ENCODE measurements at regions of chr6 and their contacts with region 1.

Region 1: GRCh38 chr6:137975188-137975940 is 108.3 kb downstream of the TNFAIP3 start:
- DNase-seq: no peak
- H3K4me3 ChIP-seq: no peak overlapping the region
- H3K27ac ChIP-seq: no peak overlapping the region
- H3K4me1 ChIP-seq: peaks cover 4% of the 10 kb centered on the region
- H3K27me3 ChIP-seq: no peaks in the 10 kb centered on the region
- CTCF ChIP-seq: peak; percentile 31 to 43

Region 2: GRCh38 chr6:137661601-137662000 is 313.8 kb before region 1 on chr6:
- CTCF ChIA-PET with region 1: interaction called, 6 read pairs
- dilution Hi-C with region 1: no loop called
- in situ Hi-C with region 1: no loop called
- intact Hi-C with region 1: loop called (anchors 1 kb)
- DNase-seq: peak; percentile 16
- H3K4me3 ChIP-seq: no peak overlapping the region
- H3K27ac ChIP-seq: no peak overlapping the region
- H3K4me1 ChIP-seq: no peaks in the 10 kb centered on the region
- H3K27me3 ChIP-seq: peaks cover 4% of the 10 kb centered on the region
- CTCF ChIP-seq: peak; percentile 70 to 73

Measured in mammary epithelial cell (primary cell).